ENCODE measurements at regions of chr7 and their contacts with region 1.

Region 1: GRCh38 chr7:76149847-76150691 is 51.6 kb upstream of the SRRM3 start:
- DNase-seq: no peak
- H3K4me3 ChIP-seq: peak overlapping the region; percentile 15
- CTCF ChIP-seq: no peak

Region 2: DNA sequence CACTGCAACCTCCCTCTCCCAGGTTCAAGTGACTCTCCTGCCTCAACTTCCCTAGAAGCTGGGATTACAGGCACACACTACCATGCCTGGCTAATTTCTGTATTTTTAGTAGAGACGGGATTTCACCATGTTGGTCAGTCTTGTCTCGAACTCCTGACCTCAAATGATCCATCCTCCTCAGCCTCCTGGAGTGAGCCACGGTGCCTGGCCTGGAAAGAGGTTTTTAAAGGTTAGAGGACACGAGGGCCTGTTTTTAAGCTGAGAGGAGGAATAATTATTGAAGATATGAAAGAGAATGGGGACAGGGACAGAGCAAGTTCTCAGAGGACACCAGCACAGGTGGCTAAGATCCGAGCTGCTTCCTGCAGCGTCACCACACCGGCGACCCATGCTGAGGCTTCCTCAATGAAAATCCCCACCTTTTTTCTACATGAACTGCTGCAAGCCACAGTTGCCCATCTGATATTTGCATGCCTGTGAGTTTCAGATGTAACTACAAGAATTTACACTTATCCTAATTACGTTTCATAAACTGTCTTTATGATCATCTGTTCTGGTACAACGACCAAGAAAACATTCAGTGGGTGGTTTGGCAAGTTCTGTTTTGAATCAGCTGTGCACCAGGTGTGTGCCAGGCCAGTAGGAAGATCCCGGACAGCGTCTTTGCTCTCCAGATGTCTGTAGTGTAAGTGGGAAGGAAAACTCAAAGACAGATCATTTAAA is 487.3 kb before region 1 on chr7:
- in situ Hi-C with region 1: no loop called
- DNase-seq: no peak
- H3K4me3 ChIP-seq: no peak overlapping the region
- CTCF ChIP-seq: no peak

Region 3: DNA sequence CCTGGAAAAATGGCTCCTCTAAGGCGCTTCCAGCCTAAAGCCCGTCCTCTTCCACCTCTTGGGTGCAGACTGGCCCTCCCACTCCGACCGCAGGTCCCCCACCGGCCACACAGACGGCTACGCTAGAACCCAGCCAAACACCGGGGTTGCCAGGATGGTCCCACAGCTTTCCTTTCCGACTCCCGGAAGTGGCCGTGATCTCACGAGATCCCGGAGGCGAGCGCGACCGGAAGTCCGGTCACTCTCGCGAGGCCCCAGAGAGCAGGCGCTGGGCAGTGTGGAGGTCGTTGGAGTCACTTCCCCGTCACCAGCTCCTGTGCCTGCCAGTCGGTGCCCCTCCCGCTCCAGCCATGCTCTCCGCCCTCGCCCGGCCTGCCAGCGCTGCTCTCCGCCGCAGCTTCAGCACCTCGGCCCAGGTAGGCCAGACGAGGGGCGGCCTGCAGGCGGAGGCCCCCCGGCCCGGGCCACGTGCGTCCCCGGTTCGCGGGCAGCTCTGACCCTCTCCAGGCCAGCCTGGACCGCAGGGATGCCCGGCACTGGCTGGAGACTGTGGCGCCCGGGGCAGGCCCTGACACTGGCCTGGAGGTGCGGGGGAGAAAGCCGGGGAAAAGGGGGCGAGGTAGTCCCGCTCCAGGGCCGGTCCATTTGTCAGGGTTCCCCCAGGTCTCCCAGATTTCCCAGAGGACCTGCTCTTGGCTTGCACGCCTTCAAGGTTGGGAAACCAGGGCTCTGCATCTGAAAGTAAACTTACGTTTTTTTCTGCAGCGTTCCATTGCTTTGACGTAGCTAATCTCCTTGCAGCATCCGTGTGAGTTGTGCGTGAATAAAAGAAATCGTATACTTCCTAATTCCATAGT is 102.0 kb before region 1 on chr7 and contains the starts of genes MDH2 and STYXL1:
- in situ Hi-C with region 1: loop called (anchors 25 kb)
- DNase-seq: peak; percentile 91
- H3K4me3 ChIP-seq: peak within 1 kb of the TSS; percentile 98
- CTCF ChIP-seq: no peak

Region 4: GRCh38 chr7:76216381-76217082 is 66.5 kb after region 1 on chr7:
- in situ Hi-C with region 1: no loop called
- DNase-seq: no peak
- H3K4me3 ChIP-seq: no peak overlapping the region
- CTCF ChIP-seq: no peak